SK-MEL-5 (cell line): ENCODE measurements at regions of chr7 and their contacts with region 1.

Region 1: GRCh38 chr7:148699782-148700629 is 1.3 kb downstream of the CUL1 start:
- DNase-seq: peak; percentile 36

Region 2: GRCh38 chr7:148563583-148564274 is 136.3 kb before region 1 on chr7:
- in situ Hi-C with region 1: loop called (anchors 10 kb)
- DNase-seq: no peak

Region 3: DNA sequence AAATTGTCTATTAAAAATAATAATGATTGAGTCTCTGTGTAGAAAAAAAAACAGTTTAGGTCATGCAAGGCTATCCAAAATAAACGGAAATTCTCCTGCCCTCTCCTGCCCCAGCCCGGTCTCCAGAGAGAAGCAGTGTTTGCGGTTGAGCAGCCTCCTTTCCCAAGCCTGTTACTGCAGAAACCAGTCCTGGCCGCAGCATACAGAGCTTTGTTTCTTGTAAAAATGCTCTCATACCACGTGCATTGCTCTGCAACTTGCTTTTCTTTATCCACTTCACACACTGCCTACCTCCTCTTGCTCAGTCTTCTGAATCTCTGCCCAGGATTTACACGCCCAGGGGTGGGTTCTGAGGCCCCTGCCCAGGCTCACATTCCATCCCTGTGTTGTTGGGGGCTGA is 35.7 kb before region 1 on chr7:
- in situ Hi-C with region 1: no loop called
- DNase-seq: peak; percentile 39

Region 4: GRCh38 chr7:148800677-148801076 is 100.7 kb after region 1 on chr7:
- in situ Hi-C with region 1: no loop called
- DNase-seq: no peak